SK-N-SH (cell line): ENCODE measurements at regions of chr16 and their contacts with region 1.

Region 1: DNA sequence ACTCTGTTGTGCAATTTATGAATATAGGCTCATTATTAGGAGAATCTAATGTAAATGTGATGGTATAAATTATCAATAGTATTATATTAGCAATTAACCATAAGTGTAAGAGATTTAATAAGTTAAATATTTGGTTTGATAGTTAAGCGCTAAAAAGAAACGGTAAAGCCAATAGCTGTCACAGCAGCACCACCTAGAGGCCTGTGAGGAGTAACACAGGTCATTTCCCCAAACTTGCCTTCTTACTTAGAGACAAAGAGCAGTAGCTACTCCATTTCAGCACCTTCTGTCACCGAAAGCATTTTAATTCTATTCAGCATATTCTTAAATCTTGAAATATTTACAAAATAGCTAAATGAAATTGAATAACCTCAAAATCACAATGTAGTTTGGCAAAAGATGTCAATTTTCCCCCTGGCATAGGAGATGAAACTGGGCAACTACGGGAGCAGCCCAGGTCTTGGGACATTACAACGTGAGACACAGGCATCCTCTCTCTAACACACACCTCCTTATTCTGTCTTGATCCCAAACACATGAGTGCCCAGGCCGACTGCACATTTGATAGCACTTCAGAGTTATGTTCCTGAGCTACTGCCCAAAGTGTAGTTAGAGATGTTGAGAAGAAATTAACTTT is 14.2 kb upstream of the DYNLRB2 start:
- DNase-seq: peak; percentile 49
- H3K4me3 ChIP-seq: no peak overlapping the region; a peak in 1 of 4 replicates
- H3K27ac ChIP-seq: no peak overlapping the region
- H3K4me1 ChIP-seq: no peaks in the 10 kb centered on the region
- H3K27me3 ChIP-seq: no peaks in the 10 kb centered on the region
- CTCF ChIP-seq: peak; percentile 92
- EP300 ChIP-seq: no peak
- RAD21 ChIP-seq: peak; percentile 84

Region 2: DNA sequence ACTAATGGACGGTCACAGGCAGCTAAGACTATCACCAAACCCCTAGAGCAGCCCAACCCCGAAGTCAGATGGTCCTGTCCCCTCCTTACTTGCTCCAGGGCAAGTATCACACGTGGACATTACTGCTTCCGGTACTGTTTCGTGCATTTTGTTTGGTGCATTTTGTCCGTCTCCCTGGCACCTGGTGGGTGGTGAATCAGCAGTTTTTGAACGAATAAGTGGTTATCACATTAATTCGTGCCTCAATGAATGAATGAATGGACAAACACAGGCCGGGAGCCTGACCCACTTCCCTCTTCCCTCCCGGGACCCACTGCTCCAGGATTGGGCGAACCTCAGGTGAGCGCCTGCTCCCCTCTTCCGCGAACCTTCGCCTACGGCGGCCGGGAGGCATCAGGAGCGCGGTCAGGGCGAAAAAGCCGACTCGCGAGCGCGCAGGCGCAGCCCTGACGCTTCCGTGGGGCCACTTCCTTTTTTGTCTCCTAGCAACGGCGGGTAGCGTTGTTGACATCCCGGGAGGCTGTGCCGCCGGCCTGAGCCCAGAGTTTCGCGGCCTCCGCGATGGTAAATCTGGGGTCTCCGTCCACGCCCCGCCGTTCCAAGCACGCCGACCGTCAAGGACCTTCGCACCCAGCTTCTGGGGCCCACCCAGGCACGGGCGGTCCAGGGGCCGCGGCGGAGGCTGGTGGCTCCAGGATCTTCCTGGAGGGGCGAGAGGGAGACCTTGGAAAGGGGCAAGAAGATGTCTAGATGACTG is 14.2 kb after region 1 on chr16 and contains the start of gene DYNLRB2:
- CTCF ChIA-PET with region 1: interaction called, 21 read pairs
- POLR2A ChIA-PET with region 1: no interaction called
- DNase-seq: peak; percentile 92
- H3K4me3 ChIP-seq: peak within 1 kb of the TSS; percentile 77 to 82
- H3K27ac ChIP-seq: peak within 1 kb of the TSS; percentile 45 to 62; a peak in 2 of 4 replicates
- H3K4me1 ChIP-seq: peaks cover 0 to 3% of the 10 kb centered on the region in 2 experiments; a peak in 1 of 4 replicates
- H3K27me3 ChIP-seq: no peaks in the 10 kb centered on the region
- CTCF ChIP-seq: no peak
- EP300 ChIP-seq: no peak
- RAD21 ChIP-seq: no peak
- polyA plus RNA-seq, gene DYNLRB2: 0.44 and 0.50 TPM in 2 replicates

Region 3: DNA sequence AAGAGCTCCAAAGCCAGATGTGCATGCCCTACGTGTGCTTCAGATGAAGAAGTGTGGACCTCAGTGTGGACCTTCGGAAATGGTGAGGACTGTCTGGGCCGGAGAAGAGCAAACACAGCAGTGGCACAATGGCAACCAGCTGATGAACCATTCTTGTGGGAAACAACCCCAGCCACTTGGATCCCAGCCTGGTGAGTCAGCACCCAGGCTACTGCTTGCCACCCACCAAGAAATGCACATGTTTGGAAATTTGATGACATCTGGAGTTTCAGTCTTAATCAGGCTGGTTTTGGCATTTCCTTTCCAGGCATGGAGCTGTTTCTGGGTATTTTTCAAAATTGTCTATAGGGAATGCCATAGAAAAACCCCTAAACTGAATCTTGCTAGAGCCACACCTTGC is 56.9 kb after region 1 on chr16:
- CTCF ChIA-PET with region 1: no interaction called
- POLR2A ChIA-PET with region 1: no interaction called
- DNase-seq: no peak
- H3K4me3 ChIP-seq: no peak overlapping the region
- H3K27ac ChIP-seq: no peak overlapping the region
- H3K4me1 ChIP-seq: no peaks in the 10 kb centered on the region
- H3K27me3 ChIP-seq: no peaks in the 10 kb centered on the region
- CTCF ChIP-seq: no peak
- EP300 ChIP-seq: no peak
- RAD21 ChIP-seq: no peak